Activated CD4-positive, alpha-beta T cell treated with anti-CD3 and anti-CD28 coated beads, Interleukin-2, amount 10 ng/mL, durations not matched to agents 24 days and 14 days (primary cell): ENCODE measurements at regions of chr1 and their contacts with region 1.

Region 1: DNA sequence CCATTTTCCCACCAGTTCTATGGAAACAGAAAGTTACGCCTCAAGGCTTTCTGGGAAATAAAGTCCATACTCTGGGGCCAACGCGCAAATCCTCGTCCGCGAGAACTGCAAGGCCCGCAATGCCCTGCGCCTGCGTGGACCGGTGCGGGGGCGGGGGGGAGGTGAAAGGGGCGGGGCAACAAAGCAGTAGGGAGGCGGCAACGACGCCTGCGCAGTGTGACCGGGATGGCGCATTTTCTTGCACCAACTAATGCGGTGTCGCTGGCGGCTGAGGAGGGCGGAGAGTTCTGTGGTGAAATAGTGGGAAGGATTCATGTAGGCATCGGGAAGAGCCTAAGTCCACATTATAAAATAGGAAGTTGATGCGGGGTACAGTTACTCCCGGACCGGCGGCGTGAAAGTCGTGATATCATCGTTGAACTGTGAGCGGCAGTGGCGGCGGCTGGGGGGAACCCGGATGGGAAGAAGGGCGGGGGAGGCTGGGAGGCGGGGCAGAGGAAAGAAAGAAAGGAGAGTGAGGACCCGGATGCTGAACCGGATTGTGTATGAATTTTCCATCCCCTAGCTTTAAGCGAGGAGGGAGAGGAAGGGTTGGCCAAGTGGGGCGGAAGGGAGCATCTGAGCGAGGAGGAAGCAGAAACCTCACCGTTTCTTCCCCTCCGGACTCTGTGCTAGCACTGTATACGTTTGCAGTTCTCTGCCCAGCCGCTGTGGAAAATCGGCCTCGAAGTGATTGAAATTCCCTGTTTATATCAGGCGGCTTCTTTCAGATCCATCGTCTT is at the start of gene GGPS1:
- DNase-seq: peak; percentile 98
- H3K4me3 Mint-ChIP-seq: no peak within 1 kb of the TSS
- H3K27ac Mint-ChIP-seq: no peak within 1 kb of the TSS
- H3K4me1 Mint-ChIP-seq: peaks cover 25% of the 10 kb centered on the region
- H3K27me3 Mint-ChIP-seq: no peaks in the 10 kb centered on the region
- total RNA-seq, gene GGPS1: 30.8 and 33.9 TPM in 2 replicates

Region 2: DNA sequence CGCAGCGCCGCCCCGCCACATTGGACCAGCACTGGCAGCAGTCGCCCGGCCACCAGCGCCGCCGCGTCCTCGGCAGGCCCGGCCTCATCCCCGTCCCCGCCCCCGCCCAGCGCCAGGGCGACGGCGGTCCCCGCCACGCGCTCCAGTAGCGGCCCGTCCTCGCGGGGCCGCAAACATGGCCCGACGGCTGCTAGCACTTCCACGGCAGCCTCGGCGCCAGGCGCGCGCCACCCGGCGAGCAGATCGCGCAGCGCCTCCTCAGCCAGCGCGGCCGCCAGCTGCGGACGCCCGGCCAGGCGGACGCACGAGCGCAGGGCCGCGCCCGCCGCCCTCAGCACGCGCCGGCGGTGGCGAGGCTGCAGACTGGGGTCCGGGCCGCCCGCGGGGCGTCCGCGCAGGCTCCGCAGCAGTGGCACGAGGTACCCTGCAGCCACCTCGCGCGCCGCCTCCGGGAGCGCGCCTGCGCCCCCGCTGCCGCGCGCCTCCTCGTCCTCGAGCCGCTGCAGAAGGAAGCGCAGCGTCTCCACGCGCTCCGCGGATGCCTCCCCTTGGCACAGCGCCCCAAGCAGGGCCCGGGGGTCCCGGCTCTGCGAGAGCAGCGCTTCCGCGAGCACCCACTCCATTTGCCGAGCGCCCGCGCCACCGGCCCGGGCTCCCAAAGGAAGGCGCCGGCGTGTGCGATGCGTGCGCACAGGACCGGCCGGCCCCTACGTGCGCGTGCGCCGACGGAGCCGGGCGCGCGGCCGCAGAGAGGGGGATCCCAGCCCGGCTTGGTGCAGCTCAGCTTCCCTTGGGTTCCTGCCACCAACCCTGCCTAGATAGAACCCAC is 849.9 kb before region 1 on chr1 and contains the start of gene TARBP1:
- intact Hi-C with region 1: loop called (anchors 2 kb)
- DNase-seq: peak; percentile 94
- H3K4me3 Mint-ChIP-seq: peak within 1 kb of the TSS; percentile 87
- H3K27ac Mint-ChIP-seq: peak within 1 kb of the TSS; percentile 85
- H3K4me1 Mint-ChIP-seq: peaks cover 34% of the 10 kb centered on the region
- H3K27me3 Mint-ChIP-seq: peaks cover 12% of the 10 kb centered on the region
- total RNA-seq, gene TARBP1: 70.7 and 75.9 TPM in 2 replicates

Region 3: DNA sequence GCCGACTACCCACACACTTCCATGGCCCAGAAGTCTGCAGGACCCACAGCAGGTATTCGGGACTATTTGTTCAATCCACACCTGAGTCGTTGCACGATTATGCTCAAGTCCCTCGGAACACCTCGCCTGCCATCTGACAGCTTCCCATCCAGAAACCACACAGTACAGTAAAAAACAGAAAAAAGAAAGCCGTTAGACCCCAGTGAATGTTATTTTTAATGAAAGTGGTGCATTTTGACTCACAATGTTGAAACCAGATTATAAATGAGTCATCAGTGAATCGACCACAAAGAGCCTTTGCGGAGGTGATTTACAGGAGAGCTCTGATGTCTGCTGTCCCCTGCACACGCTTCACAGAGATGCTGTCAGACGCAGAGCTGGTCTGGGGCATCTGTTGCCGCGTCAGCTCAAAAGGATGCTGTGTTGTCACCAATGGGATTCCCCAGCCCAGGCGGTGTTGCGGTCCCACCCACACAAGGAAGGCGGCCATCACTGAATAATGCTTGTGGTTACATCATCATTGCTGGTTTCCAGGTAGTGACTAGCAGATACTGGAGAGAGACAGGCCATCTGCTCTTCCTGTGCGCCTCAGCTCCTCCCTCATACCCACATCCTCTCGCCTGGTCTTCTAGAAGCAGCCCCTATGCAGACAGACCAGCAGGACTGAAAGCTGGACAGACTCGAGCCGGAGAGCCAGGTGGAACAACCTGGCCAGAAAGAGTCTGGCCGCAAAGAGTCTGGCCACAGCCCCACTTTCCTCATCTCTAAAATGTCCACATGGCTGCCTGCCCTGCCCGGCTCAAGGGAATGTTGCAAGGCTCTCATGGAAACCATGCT is 316.7 kb before region 1 on chr1:
- intact Hi-C with region 1: loop called (anchors 10 kb)
- DNase-seq: peak; percentile 98
- H3K4me3 Mint-ChIP-seq: peak overlapping the region; percentile 76
- H3K27ac Mint-ChIP-seq: peak overlapping the region; percentile 98
- H3K4me1 Mint-ChIP-seq: peaks cover 79% of the 10 kb centered on the region
- H3K27me3 Mint-ChIP-seq: peaks cover 5% of the 10 kb centered on the region

Region 4: DNA sequence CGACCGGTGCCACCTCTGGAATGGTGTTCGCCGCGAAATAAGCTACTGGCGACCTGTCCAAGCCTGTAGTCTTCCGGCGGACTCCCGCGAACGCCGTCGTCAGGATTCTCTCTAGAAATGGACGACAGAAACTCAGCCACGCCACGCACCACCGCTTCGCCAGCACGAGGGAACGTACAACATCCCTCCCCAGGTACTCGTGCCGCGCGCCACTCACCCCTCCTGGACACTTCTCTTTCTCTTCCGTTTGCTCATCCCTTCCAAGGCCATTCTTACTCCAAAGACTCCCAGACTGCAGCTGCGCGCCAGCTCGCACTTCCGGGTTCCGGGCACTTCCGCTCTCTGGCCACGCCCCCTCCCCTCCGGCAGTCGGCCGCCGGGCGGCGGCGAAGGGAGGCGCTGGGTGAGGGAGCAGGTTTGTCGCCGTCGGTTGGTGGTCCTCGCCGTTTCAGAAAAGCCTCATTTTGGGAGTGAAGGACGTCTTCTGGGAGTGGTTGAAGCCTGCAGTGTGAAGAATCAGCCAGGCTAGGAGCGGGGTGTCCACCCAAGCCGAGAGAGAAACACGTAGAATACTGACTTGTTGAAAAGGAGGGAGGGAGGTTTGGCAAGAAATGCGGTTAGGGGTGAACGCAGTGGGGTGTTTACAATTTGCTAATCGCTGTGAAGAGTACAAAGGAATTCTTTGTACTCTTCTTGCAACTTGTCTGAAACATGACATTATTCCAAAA is 167.4 kb before region 1 on chr1 and contains the start of gene RBM34:
- intact Hi-C with region 1: loop called (anchors 1 kb)
- DNase-seq: peak; percentile 98
- H3K4me3 Mint-ChIP-seq: peak within 1 kb of the TSS; percentile 93
- H3K27ac Mint-ChIP-seq: peak within 1 kb of the TSS; percentile 94
- H3K4me1 Mint-ChIP-seq: peaks cover 12% of the 10 kb centered on the region
- H3K27me3 Mint-ChIP-seq: no peaks in the 10 kb centered on the region
- total RNA-seq, gene RBM34: 123 and 135 TPM in 2 replicates

Region 5: GRCh38 chr1:235295902-235296376 is 32.6 kb before region 1 on chr1:
- intact Hi-C with region 1: loop called (anchors 1 kb)
- DNase-seq: no peak
- H3K4me3 Mint-ChIP-seq: no peak overlapping the region
- H3K27ac Mint-ChIP-seq: no peak overlapping the region
- H3K4me1 Mint-ChIP-seq: peaks cover 40% of the 10 kb centered on the region
- H3K27me3 Mint-ChIP-seq: no peaks in the 10 kb centered on the region

Region 6: DNA sequence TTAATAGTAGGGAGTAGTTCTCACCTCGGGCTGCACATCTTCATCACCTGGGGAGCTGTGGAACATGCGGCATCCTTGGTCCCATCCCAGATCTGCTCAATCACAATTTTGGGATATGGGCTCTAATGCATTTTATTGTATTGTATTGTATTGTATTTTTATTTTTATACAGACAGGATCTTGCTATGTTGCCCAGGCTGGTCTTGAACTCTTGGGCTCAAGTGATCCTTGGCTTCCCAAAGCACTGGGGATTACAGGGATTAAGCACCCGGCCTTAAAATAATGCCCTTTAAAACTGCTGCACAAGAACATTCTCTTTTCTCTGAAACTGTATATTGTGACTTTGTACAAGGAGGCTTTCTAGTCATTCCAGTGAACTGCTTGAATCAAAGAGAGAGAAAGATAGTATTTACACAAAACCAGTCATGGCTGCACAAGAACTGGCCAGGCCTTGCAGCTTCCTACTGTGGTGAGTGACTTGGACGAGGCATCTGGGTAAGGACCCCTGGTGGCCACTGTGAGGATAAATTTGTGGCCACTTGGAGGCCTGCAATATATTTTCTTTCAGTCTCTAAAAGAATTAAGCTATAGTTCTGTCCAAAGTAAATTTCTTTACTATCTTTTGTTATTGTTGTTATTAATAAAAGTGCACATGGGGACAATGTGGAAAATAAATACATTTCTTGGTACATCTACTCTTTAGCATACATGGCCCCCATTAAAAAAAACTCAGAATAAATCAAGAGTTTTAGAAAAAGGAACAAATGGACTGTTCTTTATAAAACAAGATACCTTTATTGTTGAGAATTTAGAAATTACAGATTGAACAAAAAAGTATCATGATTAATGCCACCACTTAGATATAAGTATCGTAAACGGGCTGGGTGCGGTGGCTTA is 86.7 kb after region 1 on chr1:
- intact Hi-C with region 1: loop called (anchors 1 kb)
- DNase-seq: peak; percentile 87
- H3K4me3 Mint-ChIP-seq: no peak overlapping the region
- H3K27ac Mint-ChIP-seq: no peak overlapping the region
- H3K4me1 Mint-ChIP-seq: peaks cover 6% of the 10 kb centered on the region
- H3K27me3 Mint-ChIP-seq: no peaks in the 10 kb centered on the region

Region 7: GRCh38 chr1:235866913-235867845 is 538.6 kb after region 1 on chr1:
- intact Hi-C with region 1: loop called (anchors 2 kb)
- DNase-seq: peak; percentile 100
- H3K4me3 Mint-ChIP-seq: peak overlapping the region; percentile 99
- H3K27ac Mint-ChIP-seq: peak overlapping the region; percentile 100
- H3K4me1 Mint-ChIP-seq: peaks cover 52% of the 10 kb centered on the region
- H3K27me3 Mint-ChIP-seq: no peaks in the 10 kb centered on the region